ENCODE measurements at regions of chr9 and their contacts with region 1.

Region 1: GRCh38 chr9:90914868-90915483 is 113.4 kb downstream of the SYK start:
- DNase-seq: peak; percentile 60
- ATAC-seq: peak; percentile 98
- H3K4me3 Mint-ChIP-seq: no peak overlapping the region
- H3K27ac Mint-ChIP-seq: no peak overlapping the region
- H3K4me1 Mint-ChIP-seq: peaks cover 21% of the 10 kb centered on the region
- H3K27me3 Mint-ChIP-seq: no peaks in the 10 kb centered on the region
- CTCF ChIP-seq: no peak

Region 2: DNA sequence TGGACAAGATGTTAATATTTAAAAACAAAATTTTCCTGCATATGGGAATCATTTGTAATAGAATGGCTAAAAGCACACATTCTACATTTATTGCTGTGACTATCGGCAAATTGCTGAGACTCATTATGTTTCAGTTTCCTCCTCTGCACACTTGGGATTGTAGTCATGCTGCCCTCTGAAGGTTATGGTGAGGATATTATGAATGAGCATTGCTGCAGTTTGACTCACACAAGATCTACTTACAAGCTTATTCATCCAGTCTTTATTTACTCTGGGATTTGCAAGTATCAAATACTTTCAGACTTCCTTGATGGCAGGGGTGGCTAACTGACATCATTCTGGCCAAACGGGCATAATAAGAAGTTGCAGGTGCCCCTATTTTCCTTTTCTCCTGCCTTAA is 518.2 kb after region 1 on chr9:
- CTCF ChIA-PET with region 1: interaction called, 154 read pairs
- POLR2A ChIA-PET with region 1: no interaction called
- intact Hi-C with region 1: no loop called
- DNase-seq: no peak
- ATAC-seq: peak; percentile 34
- H3K4me3 Mint-ChIP-seq: no peak overlapping the region
- H3K27ac Mint-ChIP-seq: no peak overlapping the region
- H3K4me1 Mint-ChIP-seq: peaks cover 4% of the 10 kb centered on the region
- H3K27me3 Mint-ChIP-seq: peaks cover 11% of the 10 kb centered on the region
- CTCF ChIP-seq: no peak

Region 3: GRCh38 chr9:91727316-91727861 is 812.4 kb after region 1 on chr9:
- CTCF ChIA-PET with region 1: interaction called, 43 read pairs
- POLR2A ChIA-PET with region 1: no interaction called
- intact Hi-C with region 1: loop called (anchors 1 kb)
- DNase-seq: no peak
- ATAC-seq: peak; percentile 85
- H3K4me3 Mint-ChIP-seq: no peak overlapping the region
- H3K27ac Mint-ChIP-seq: no peak overlapping the region
- H3K4me1 Mint-ChIP-seq: no peaks in the 10 kb centered on the region
- H3K27me3 Mint-ChIP-seq: no peaks in the 10 kb centered on the region
- CTCF ChIP-seq: no peak

Region 4: GRCh38 chr9:91775011-91775707 is 860.2 kb after region 1 on chr9:
- CTCF ChIA-PET with region 1: interaction called, 6 read pairs
- POLR2A ChIA-PET with region 1: no interaction called
- intact Hi-C with region 1: loop called (anchors 1 kb)
- DNase-seq: peak; percentile 46
- ATAC-seq: peak; percentile 75
- H3K4me3 Mint-ChIP-seq: no peak overlapping the region
- H3K27ac Mint-ChIP-seq: no peak overlapping the region
- H3K4me1 Mint-ChIP-seq: no peaks in the 10 kb centered on the region
- H3K27me3 Mint-ChIP-seq: peaks cover 12% of the 10 kb centered on the region
- CTCF ChIP-seq: peak; percentile 89